Caco-2 (cell line): ENCODE measurements at regions of chr1 and their contacts with region 1.

Region 1: DNA sequence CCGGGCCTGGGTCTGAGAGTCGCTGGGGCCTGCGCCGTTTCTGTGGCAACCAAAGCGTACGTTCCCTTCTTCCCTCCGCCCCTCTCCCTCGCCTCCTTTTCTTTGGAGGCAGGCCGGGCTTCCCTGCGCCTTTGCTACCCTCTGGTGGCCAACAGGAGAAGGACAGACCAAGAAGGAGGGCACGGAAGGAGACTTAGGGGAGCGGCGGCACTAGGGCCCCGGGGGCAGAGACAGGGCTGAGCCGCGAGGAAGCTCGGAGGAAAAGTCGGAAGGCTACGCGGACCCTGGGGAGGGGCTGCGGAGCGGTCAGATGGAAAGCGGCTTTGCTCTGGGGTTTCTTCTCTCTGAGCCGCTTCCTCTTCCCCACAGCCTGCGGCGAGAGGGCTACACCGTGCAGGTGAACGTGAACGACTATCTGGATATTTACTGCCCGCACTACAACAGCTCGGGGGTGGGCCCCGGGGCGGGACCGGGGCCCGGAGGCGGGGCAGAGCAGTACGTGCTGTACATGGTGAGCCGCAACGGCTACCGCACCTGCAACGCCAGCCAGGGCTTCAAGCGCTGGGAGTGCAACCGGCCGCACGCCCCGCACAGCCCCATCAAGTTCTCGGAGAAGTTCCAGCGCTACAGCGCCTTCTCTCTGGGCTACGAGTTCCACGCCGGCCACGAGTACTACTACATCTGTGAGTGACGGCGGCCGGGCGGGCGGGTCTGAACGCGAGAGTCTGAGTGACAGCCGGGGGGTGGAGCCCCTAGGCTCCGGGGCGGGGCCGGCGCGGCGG is 6.3 kb downstream of the EFNA3 start:
- DNase-seq: peak; percentile 93 to 96
- H3K4me3 ChIP-seq: peak overlapping the region; percentile 64
- H3K4me3 Mint-ChIP-seq: peak overlapping the region; percentile 94
- H3K27ac Mint-ChIP-seq: peak overlapping the region; percentile 83
- H3K4me1 ChIP-seq: peaks cover 28% of the 10 kb centered on the region
- H3K4me1 Mint-ChIP-seq: peaks cover 8% of the 10 kb centered on the region
- H3K27me3 ChIP-seq: 0 out of 2 replicates have a peak, but pooled peaks cover 2% of the 10 kb centered on the region
- H3K27me3 Mint-ChIP-seq: peaks cover 11% of the 10 kb centered on the region
- CTCF ChIP-seq: peak; percentile 86 to 91

Region 2: DNA sequence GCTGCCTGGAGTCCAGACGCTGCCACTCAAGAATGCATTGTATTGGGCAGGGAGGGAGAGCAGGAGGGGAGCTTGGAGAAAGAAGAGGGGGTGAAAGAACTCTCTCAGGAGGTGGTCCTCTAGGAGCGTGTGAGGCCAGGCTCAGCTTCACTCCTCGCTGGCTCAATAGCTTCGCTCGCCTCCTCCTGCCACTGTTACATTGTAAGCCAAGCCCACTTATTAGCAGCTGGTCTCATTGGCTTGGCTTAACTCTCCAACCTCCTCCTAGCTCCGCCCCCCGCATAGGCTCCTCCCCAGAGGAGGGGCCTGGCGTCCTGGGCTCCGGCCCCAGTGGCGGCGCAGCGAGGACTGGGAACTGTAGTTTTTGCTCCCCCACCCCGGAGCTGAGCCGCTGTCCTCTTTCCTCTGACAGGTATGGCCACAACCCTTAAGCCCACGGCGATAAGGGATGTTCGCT is 214.8 kb before region 1 on chr1 and contains the start of gene KCNN3:
- CTCF ChIA-PET with region 1: no interaction called
- POLR2A ChIA-PET with region 1: no interaction called
- intact Hi-C with region 1: loop called (anchors 10 kb)
- DNase-seq: peak; percentile 92 to 94
- H3K4me3 ChIP-seq: no peak within 1 kb of the TSS; the same call in 1 of the 2 replicates
- H3K4me3 Mint-ChIP-seq: peak within 1 kb of the TSS; percentile 41
- H3K27ac Mint-ChIP-seq: no peak within 1 kb of the TSS
- H3K4me1 ChIP-seq: no peaks in the 10 kb centered on the region
- H3K4me1 Mint-ChIP-seq: peaks cover 7% of the 10 kb centered on the region
- H3K27me3 ChIP-seq: peaks cover 2% of the 10 kb centered on the region; the same call in 1 of the 2 replicates
- H3K27me3 Mint-ChIP-seq: peaks cover 19% of the 10 kb centered on the region
- CTCF ChIP-seq: no peak
- total RNA-seq, gene KCNN3: 0.05 TPM in 1 of 2 replicates, not detected in the other

Region 3: GRCh38 chr1:154931940-154932487 is 152.9 kb before region 1 on chr1:
- CTCF ChIA-PET with region 1: no interaction called
- POLR2A ChIA-PET with region 1: no interaction called
- intact Hi-C with region 1: no loop called
- DNase-seq: peak; percentile 39 to 79
- H3K4me3 ChIP-seq: no peak overlapping the region
- H3K4me3 Mint-ChIP-seq: no peak overlapping the region
- H3K27ac Mint-ChIP-seq: no peak overlapping the region
- H3K4me1 ChIP-seq: peaks cover 6% of the 10 kb centered on the region
- H3K4me1 Mint-ChIP-seq: no peaks in the 10 kb centered on the region
- H3K27me3 ChIP-seq: no peaks in the 10 kb centered on the region
- H3K27me3 Mint-ChIP-seq: no peaks in the 10 kb centered on the region
- CTCF ChIP-seq: no peak

Region 4: DNA sequence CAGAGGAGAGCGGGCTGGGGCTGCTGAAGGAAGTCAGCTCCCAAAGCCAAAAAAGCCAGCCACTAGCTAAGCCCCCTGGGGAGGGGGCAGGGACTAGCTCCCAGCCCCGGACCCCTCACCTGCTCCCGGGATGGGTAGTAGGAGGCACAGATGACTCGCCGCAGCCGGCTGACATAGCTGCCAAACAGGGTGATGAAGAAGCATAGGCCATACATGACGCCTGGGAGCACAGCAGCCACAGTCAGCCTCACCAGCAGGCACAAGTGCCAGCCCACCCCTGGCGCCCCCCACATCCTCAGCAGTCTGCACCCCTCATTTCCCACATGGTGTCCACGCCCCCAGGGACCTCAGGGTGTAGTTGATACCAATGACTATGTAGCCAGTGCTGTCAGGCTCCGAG is 58.7 kb before region 1 on chr1:
- CTCF ChIA-PET with region 1: no interaction called
- POLR2A ChIA-PET with region 1: no interaction called
- intact Hi-C with region 1: no loop called
- DNase-seq: no peak
- H3K4me3 ChIP-seq: no peak overlapping the region
- H3K4me3 Mint-ChIP-seq: no peak overlapping the region
- H3K27ac Mint-ChIP-seq: no peak overlapping the region
- H3K4me1 ChIP-seq: peaks cover 10% of the 10 kb centered on the region
- H3K4me1 Mint-ChIP-seq: peaks cover 14% of the 10 kb centered on the region
- H3K27me3 ChIP-seq: no peaks in the 10 kb centered on the region
- H3K27me3 Mint-ChIP-seq: no peaks in the 10 kb centered on the region
- CTCF ChIP-seq: no peak

Region 5: DNA sequence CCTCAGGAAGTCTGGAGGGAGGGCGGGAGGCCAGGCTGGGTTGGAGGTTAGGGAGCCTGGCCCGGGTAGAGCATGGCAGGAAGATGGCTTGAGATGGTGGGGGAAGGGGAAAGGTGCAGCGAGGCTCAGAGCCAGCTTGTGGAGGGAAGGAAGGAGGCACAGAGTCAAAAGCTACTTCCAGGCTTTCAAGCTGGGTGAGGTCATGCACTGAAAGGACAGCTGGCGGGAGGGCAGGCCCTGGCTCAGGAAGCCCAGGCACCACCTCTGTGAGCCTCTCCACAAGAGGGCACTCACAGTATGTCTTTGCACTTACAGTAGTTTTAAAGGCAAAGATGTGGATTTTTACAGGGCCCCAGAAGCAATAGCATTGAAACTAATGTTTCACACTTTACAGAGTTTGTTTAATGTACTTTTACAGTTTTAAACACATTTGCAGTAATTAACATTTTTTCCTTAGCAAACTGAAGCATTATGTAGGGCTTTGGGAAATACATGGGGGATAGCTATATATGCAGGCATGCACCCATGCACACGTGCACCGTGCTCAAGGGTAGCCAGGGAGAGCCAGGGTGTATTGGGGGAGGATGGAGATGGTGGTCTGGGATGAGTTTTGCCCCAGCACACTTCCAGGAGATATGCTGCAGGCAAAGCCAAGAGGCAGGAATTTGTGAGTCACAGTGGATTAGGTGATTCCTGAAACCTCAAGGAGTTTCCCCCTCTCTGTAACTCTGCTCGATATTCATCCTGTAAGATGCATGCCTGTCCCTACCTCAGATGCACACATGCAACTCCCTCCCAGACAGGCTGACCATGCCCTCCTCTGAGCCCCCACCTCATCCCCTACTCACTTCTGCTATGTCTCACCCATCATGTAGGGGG is 39.9 kb before region 1 on chr1:
- CTCF ChIA-PET with region 1: interaction called, 20 read pairs
- POLR2A ChIA-PET with region 1: no interaction called
- intact Hi-C with region 1: loop called (anchors 1 kb)
- DNase-seq: peak; percentile 79 to 81
- H3K4me3 ChIP-seq: no peak overlapping the region
- H3K4me3 Mint-ChIP-seq: no peak overlapping the region
- H3K27ac Mint-ChIP-seq: no peak overlapping the region
- H3K4me1 ChIP-seq: peaks cover 18% of the 10 kb centered on the region
- H3K4me1 Mint-ChIP-seq: peaks cover 15% of the 10 kb centered on the region
- H3K27me3 ChIP-seq: no peaks in the 10 kb centered on the region
- H3K27me3 Mint-ChIP-seq: no peaks in the 10 kb centered on the region
- CTCF ChIP-seq: peak; percentile 73 to 84

Region 6: DNA sequence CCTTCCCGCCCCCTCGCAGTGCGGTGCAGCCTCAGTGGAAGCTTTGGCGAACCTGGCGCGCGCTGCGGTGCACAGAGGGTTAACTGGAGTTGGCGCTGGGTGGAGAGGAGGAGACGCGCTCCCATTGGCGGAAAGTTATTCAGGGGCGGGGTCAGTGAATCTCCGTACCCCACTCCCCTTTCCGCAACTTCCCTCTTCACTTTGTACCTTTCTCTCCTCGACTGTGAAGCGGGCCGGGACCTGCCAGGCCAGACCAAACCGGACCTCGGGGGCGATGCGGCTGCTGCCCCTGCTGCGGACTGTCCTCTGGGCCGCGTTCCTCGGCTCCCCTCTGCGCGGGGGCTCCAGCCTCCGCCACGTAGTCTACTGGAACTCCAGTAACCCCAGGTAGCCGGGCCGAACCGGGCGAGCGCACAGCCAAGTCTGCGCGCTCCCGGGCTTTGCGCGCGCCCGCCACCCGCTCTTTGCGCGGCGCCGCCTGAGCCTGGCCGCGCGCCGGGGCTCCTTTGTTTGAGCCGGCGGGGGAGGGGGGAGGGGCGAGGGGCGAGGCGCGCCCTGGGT is 21.3 kb before region 1 on chr1 and contains the start of gene EFNA4:
- CTCF ChIA-PET with region 1: interaction called, 39 read pairs
- POLR2A ChIA-PET with region 1: no interaction called
- intact Hi-C with region 1: loop called (anchors 1 kb)
- DNase-seq: peak; percentile 91
- H3K4me3 ChIP-seq: peak within 1 kb of the TSS; percentile 64
- H3K4me3 Mint-ChIP-seq: peak within 1 kb of the TSS; percentile 86
- H3K27ac Mint-ChIP-seq: peak within 1 kb of the TSS; percentile 22
- H3K4me1 ChIP-seq: 0 out of 2 replicates have a peak, but pooled peaks cover 19% of the 10 kb centered on the region
- H3K4me1 Mint-ChIP-seq: peaks cover 22% of the 10 kb centered on the region
- H3K27me3 ChIP-seq: no peaks in the 10 kb centered on the region
- H3K27me3 Mint-ChIP-seq: no peaks in the 10 kb centered on the region
- CTCF ChIP-seq: no peak
- total RNA-seq, gene EFNA4: 13.8 and 16.0 TPM in 2 replicates

Region 7: DNA sequence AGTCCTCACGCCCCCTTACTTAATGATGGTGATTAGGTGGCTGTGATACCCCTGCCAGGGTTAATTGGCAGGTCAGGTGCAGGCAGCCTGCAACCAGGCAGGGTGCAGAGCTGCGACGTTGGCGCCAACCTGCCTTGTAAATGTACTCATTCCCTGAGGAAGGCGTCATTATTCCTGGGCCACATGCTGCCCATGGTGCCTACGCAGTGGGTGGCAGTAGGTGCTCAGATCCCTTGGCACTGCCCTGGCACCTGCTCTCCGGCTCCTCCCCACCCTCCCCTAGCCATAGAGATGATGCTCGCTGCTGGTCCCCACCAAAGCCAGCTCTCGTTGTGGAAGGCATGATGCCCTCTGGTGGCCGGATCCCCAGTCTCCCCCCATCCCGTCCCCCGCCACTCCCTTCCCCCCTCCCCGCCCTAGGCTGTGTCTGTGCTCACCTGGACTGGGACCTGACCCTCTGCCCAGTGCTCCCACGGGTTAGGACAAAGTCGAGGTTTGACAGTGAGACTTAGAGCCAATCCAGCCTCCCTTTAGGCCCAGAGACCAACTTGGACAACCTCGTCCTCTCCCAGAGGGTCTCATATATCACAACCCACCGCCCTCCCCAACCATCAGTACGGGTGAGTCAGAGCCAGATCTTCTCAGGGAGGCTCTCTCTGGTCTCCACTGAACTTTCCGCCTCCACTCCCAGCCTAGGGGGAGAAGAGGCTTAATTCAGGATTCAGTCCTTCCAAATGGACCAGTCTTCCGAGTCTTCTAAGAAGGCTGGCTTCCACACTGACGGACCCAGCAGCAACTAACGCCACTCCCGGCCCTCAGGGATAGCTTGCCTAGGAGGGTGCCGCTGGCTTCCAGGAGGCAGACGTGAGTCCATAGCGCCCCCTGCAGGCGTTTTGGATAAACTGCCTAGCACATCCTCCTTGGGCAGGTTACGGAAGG is 82.5 kb after region 1 on chr1:
- CTCF ChIA-PET with region 1: interaction called, 147 read pairs
- POLR2A ChIA-PET with region 1: interaction called, 7 read pairs
- intact Hi-C with region 1: no loop called
- DNase-seq: peak; percentile 86 to 89
- H3K4me3 ChIP-seq: peak overlapping the region; percentile 23
- H3K4me3 Mint-ChIP-seq: peak overlapping the region; percentile 66
- H3K27ac Mint-ChIP-seq: peak overlapping the region; percentile 24
- H3K4me1 ChIP-seq: peaks cover 10% of the 10 kb centered on the region; the same call in 1 of the 2 replicates
- H3K4me1 Mint-ChIP-seq: no peaks in the 10 kb centered on the region
- H3K27me3 ChIP-seq: no peaks in the 10 kb centered on the region
- H3K27me3 Mint-ChIP-seq: no peaks in the 10 kb centered on the region
- CTCF ChIP-seq: peak; percentile 79 to 93